ENCODE measurements at regions of chr16 and their contacts with region 1.

Region 1: GRCh38 chr16:55567382-55567781 is 898 bp downstream of the CAPNS2 start:
- DNase-seq: no peak
- H3K4me3 ChIP-seq: no peak overlapping the region
- H3K27ac ChIP-seq: no peak overlapping the region
- H3K4me1 ChIP-seq: peaks cover 67% of the 10 kb centered on the region
- H3K27me3 ChIP-seq: no peaks in the 10 kb centered on the region
- CTCF ChIP-seq: no peak
- POLR2A ChIP-seq: no peak

Region 2: GRCh38 chr16:55552621-55553020 is 14.8 kb before region 1 on chr16:
- CTCF ChIA-PET with region 1: interaction called, 3 read pairs
- POLR2A ChIA-PET with region 1: no interaction called
- dilution Hi-C with region 1: no loop called
- intact Hi-C with region 1: loop called (anchors 2 kb)
- DNase-seq: peak; percentile 59
- H3K4me3 ChIP-seq: no peak overlapping the region
- H3K27ac ChIP-seq: no peak overlapping the region
- H3K4me1 ChIP-seq: peaks cover 22% of the 10 kb centered on the region
- H3K27me3 ChIP-seq: no peaks in the 10 kb centered on the region
- CTCF ChIP-seq: no peak
- POLR2A ChIP-seq: no peak

Region 3: DNA sequence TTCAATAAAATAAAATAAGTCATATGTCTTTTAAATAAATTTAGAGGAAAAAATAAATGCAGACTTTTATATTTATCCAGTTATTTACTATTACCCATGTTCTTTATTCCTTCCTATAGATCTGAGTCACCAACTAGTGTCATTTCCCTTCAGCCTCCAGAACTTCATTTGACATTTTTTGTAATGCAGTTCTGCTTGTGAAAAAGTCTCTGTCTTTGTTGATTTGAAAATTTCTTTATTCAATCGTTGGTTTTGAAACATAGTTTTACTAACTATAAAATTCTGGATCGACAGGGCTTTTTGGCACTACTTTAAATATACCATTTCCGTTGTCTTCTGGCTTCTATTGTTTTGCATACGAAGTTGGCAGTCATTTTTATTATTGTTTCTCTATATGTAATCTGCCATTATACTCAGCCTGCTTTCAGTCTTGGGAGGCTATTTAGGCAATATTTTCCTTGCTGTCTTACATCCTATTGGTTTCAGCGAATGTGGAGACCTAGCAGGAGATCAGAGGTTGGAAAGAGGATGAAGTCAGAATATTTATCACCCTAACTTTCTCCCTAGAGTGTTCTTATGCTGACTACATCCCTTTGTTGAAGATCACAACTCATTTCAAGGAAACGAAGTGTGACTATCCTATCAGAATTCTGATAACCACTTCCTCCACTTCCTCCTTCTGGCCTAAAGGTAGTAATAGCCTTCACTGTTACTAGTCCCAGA is 46.4 kb after region 1 on chr16:
- CTCF ChIA-PET with region 1: no interaction called
- POLR2A ChIA-PET with region 1: no interaction called
- dilution Hi-C with region 1: no loop called
- intact Hi-C with region 1: loop called (anchors 1 kb)
- DNase-seq: peak; percentile 72
- H3K4me3 ChIP-seq: peak overlapping the region in 1 of 3 experiments; percentile 18
- H3K27ac ChIP-seq: peak overlapping the region; percentile 64
- H3K4me1 ChIP-seq: peaks cover 22% of the 10 kb centered on the region
- H3K27me3 ChIP-seq: no peaks in the 10 kb centered on the region
- CTCF ChIP-seq: no peak
- POLR2A ChIP-seq: no peak

Region 4: GRCh38 chr16:55832425-55832757 is 265.0 kb after region 1 on chr16:
- CTCF ChIA-PET with region 1: no interaction called
- POLR2A ChIA-PET with region 1: no interaction called
- dilution Hi-C with region 1: no loop called
- intact Hi-C with region 1: no loop called
- DNase-seq: no peak
- H3K4me3 ChIP-seq: no peak overlapping the region
- H3K27ac ChIP-seq: no peak overlapping the region
- H3K4me1 ChIP-seq: no peaks in the 10 kb centered on the region
- H3K27me3 ChIP-seq: no peaks in the 10 kb centered on the region
- CTCF ChIP-seq: no peak
- POLR2A ChIP-seq: no peak

Measured in endothelial cell of umbilical vein (primary cell).